HepG2 (cell line): ENCODE measurements at regions of chr7 and their contacts with region 1.

Region 1: DNA sequence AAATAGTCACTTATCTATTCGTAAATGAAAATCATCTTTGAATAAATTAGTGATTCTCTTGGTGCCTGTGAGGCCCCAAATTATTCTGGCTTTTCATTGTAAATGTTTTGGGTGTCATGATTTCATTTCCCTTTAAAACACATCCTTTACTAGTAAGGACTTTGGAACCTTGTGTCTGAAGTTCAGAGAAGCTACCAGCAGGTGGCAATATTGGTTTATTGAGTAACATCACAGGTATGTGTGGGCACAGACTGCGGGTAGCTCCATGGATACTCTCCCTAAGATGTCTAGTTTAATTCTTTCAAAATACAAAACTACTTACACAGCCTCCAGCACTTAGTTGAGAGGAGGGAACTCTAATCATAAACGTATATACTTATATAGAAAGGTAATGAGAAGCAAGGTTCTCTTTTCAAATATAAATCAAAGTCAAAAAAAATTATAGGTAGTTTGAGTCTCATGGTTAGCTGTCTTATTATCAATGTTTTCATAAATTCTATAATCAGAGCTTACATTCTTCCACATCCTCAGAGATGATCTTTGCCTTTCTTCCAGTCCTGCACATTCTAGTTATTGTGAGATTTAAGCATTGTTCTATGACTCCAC is 449.6 kb downstream of the GRM8 start:
- DNase-seq: peak; percentile 67
- ATAC-seq: peak; percentile 97
- H3K4me3 ChIP-seq: no peak overlapping the region
- H3K27ac ChIP-seq: no peak overlapping the region
- H3K4me1 ChIP-seq: no peaks in the 10 kb centered on the region
- H3K27me3 ChIP-seq: no peaks in the 10 kb centered on the region
- CTCF ChIP-seq: peak; percentile 76
- EP300 ChIP-seq: no peak
- POLR2A ChIP-seq: no peak
- RAD21 ChIP-seq: 0 out of 2 replicates have a peak, but pooled peaks have one; percentile 28

Region 2: DNA sequence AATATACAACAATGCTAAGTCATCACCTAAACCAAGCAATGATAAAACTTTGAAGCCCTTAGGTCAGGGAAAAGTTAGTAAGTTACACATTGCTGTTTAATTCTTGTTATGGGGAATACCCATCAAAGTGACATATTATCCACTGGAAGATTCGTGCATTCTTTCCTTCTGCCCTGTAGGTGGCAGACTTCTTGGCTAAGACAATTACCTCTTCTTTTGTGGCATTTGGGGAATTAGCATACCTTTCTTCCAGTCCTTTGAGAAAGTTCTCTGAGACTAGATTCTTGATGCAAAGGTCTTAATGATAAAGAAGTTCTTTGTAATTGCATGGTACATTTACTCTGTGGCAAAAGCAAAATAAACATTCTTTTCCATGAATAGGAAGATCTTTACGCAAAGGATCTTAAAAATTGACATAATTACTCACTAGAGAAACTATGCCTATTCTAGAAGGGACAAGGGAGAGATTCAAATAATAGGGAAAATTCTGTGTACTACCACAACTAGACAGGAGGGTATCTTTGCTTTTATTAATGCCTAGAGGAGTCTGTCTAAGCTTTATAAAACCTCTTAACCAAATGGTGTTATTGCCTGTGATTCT is 53.6 kb after region 1 on chr7:
- CTCF ChIA-PET with region 1: no interaction called
- POLR2A ChIA-PET with region 1: no interaction called
- in situ Hi-C with region 1: no loop called
- intact Hi-C with region 1: loop called (anchors 1 kb)
- DNase-seq: peak; percentile 1
- ATAC-seq: no peak
- H3K4me3 ChIP-seq: no peak overlapping the region
- H3K27ac ChIP-seq: no peak overlapping the region
- H3K4me1 ChIP-seq: no peaks in the 10 kb centered on the region
- H3K27me3 ChIP-seq: no peaks in the 10 kb centered on the region
- CTCF ChIP-seq: peak; percentile 51
- EP300 ChIP-seq: no peak
- POLR2A ChIP-seq: no peak
- RAD21 ChIP-seq: no peak

Region 3: GRCh38 chr7:127066974-127067373 is 263.8 kb after region 1 on chr7:
- CTCF ChIA-PET with region 1: no interaction called
- POLR2A ChIA-PET with region 1: no interaction called
- in situ Hi-C with region 1: no loop called
- intact Hi-C with region 1: loop called (anchors 1 kb)
- DNase-seq: peak; percentile 4
- ATAC-seq: peak; percentile 75
- H3K4me3 ChIP-seq: no peak overlapping the region
- H3K27ac ChIP-seq: no peak overlapping the region
- H3K4me1 ChIP-seq: no peaks in the 10 kb centered on the region
- H3K27me3 ChIP-seq: peaks cover 0 to 3% of the 10 kb centered on the region in 2 experiments; a peak in 1 of 5 replicates
- CTCF ChIP-seq: peak; percentile 33
- EP300 ChIP-seq: no peak
- POLR2A ChIP-seq: no peak
- RAD21 ChIP-seq: no peak

Region 4: DNA sequence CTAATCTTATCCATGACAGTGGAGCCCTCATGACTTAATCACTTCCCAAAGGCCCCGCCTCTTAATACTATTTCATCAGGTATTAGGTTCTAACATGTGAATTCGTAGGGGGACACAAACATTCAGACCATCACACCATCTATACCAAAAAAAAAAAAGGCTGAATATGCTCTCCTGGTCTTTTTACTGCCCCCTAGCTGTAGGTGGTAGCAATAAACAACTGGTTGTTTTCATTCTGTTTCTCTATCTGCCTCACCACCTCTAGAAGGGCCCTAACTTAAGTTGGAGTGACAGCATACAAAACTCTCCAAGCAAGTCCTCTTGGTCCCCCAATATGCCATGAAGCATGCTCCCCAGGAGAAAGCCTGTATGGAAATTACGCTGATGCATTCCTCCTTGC is 355.5 kb after region 1 on chr7:
- CTCF ChIA-PET with region 1: no interaction called
- POLR2A ChIA-PET with region 1: no interaction called
- in situ Hi-C with region 1: no loop called
- intact Hi-C with region 1: loop called (anchors 10 kb)
- DNase-seq: peak; percentile 1
- ATAC-seq: peak; percentile 42; the same call in 2 of the 3 replicates
- H3K4me3 ChIP-seq: no peak overlapping the region
- H3K27ac ChIP-seq: no peak overlapping the region
- H3K4me1 ChIP-seq: no peaks in the 10 kb centered on the region
- H3K27me3 ChIP-seq: no peaks in the 10 kb centered on the region
- CTCF ChIP-seq: peak; percentile 43
- EP300 ChIP-seq: no peak
- POLR2A ChIP-seq: no peak
- RAD21 ChIP-seq: no peak

Region 5: DNA sequence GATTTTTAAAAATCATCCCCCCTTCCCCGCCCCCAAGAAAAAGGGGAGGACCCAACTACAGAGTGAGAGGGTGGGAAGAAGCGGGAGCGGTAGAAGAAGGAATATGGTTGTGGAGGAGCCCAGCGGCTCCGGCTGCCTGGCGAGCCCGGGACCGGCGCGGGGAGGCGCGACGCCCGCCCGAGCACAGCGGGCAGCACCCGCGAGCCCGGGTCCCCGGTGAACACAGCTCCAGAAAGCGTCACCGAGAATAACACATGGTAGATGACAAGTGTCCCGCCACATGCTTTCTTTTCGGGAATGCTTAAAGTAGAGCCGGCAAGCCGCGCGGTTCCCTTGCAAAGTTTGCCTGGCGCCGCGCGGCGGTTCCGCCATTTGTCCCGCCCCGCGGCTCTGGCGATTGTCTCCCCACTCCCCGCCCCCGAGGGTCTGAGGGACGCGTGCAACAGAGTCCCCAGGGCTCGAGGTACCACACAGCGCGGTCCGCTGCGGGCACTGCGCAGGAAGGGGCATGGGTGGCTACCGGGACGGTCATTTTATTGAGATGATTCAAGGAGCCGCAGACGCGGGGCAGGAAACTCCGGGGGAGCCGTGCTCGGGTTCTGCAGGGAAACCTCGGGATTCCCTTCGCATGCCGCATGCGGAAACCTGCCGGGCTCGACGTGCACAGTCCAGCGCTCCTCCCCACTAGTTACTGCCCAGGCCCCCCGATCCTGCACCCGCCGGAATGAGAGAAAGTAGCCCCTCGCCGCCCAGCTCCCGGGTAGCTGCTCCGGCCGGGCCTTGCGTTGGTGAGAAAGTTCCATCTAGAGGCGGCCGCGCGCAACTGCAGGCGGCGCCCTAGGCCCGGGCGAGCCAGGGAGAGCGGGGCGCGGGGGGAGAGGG is 450.4 kb after region 1 on chr7:
- CTCF ChIA-PET with region 1: no interaction called
- POLR2A ChIA-PET with region 1: no interaction called
- in situ Hi-C with region 1: no loop called
- intact Hi-C with region 1: loop called (anchors 5 kb)
- DNase-seq: peak; percentile 8
- ATAC-seq: peak; percentile 94
- H3K4me3 ChIP-seq: peak overlapping the region; percentile 65 to 73 (median 70)
- H3K27ac ChIP-seq: no peak overlapping the region
- H3K4me1 ChIP-seq: 0 out of 2 replicates have a peak, but pooled peaks cover 5% of the 10 kb centered on the region
- H3K27me3 ChIP-seq: peaks cover 8 to 66% of the 10 kb centered on the region in 2 experiments
- CTCF ChIP-seq: peak; percentile 84
- EP300 ChIP-seq: no peak
- POLR2A ChIP-seq: no peak
- RAD21 ChIP-seq: peak; percentile 54

Region 6: GRCh38 chr7:127514499-127514898 is 711.3 kb after region 1 on chr7:
- CTCF ChIA-PET with region 1: no interaction called
- POLR2A ChIA-PET with region 1: no interaction called
- in situ Hi-C with region 1: loop called (anchors 25 kb)
- intact Hi-C with region 1: loop called (anchors 1 kb)
- DNase-seq: peak; percentile 23
- ATAC-seq: peak; percentile 84
- H3K4me3 ChIP-seq: no peak overlapping the region
- H3K27ac ChIP-seq: no peak overlapping the region
- H3K4me1 ChIP-seq: no peaks in the 10 kb centered on the region
- H3K27me3 ChIP-seq: no peaks in the 10 kb centered on the region
- CTCF ChIP-seq: peak; percentile 63
- EP300 ChIP-seq: no peak
- POLR2A ChIP-seq: no peak
- RAD21 ChIP-seq: 0 out of 2 replicates have a peak, but pooled peaks have one; percentile 17